ENCODE measurements at regions of chr1 and their contacts with region 1.

Region 1: GRCh38 chr1:10494754-10495474 is 20.2 kb downstream of the PEX14 start:
- DNase-seq: peak; percentile 71 to 87 (median 84)
- H3K4me3 ChIP-seq: peak overlapping the region in 6 of 7 experiments; percentile 38 to 81 (median 63)
- H3K27ac ChIP-seq: peak overlapping the region in 1 of 2 experiments; percentile 65
- H3K4me1 ChIP-seq: peaks cover 0 to 14% (median 12%) of the 10 kb centered on the region in 4 experiments
- H3K27me3 ChIP-seq: no peaks in the 10 kb centered on the region

Region 2: DNA sequence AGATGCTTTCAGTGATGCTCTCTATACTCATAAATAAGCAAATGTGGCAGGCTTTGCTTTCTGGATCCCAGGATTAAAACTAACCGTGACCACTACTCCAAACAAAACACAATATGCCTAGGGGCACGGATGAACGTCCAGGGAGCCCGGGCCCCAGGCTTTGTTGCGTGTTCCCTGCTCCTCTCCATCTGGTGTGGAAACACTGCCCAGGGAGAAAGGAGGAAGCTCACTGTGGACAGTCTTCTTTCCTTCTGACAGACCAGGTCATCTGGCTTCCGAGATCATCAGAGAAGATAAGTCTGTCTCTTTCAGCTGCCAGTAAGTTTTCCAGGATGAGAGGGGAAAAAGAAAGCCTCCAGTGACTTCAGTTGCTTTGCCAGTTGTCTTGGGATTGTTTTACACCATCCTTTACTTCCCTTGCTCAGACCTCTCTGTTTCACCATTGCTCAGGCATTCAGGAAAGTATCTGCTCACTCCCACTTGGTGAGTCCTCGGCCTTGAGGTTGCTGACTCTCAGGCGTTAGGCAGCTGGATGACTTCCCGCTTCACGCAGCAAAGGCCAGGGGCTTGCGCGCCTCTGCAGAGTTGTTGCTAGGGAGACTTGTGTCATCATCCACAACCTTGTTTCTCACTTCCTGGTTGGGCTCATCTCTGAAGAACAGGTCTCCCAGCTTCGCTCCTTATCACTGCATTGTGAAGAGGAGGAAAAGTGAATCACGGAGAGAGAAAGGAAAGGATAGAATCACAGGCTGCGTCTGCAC is 116.7 kb before region 1 on chr1:
- CTCF ChIA-PET with region 1: interaction called, 13 read pairs
- POLR2A ChIA-PET with region 1: no interaction called
- DNase-seq: peak in 2 of 3 donors; percentile 49 to 53
- H3K4me3 ChIP-seq: no peak overlapping the region
- H3K27ac ChIP-seq: no peak overlapping the region
- H3K4me1 ChIP-seq: peaks cover 0 to 4% (median 0%) of the 10 kb centered on the region in 4 experiments
- H3K27me3 ChIP-seq: no peaks in the 10 kb centered on the region

Region 3: GRCh38 chr1:10430216-10431069 is 64.5 kb before region 1 on chr1 and contains the start of gene CENPS:
- CTCF ChIA-PET with region 1: interaction called, 118 read pairs
- POLR2A ChIA-PET with region 1: interaction called, 3 read pairs
- DNase-seq: peak; percentile 83 to 92 (median 90)
- H3K4me3 ChIP-seq: peak within 1 kb of the TSS; percentile 64 to 99 (median 89)
- H3K27ac ChIP-seq: peak within 1 kb of the TSS; percentile 74 to 92
- H3K4me1 ChIP-seq: peaks cover 3 to 24% (median 16%) of the 10 kb centered on the region in 4 experiments
- H3K27me3 ChIP-seq: no peaks in the 10 kb centered on the region

Region 4: DNA sequence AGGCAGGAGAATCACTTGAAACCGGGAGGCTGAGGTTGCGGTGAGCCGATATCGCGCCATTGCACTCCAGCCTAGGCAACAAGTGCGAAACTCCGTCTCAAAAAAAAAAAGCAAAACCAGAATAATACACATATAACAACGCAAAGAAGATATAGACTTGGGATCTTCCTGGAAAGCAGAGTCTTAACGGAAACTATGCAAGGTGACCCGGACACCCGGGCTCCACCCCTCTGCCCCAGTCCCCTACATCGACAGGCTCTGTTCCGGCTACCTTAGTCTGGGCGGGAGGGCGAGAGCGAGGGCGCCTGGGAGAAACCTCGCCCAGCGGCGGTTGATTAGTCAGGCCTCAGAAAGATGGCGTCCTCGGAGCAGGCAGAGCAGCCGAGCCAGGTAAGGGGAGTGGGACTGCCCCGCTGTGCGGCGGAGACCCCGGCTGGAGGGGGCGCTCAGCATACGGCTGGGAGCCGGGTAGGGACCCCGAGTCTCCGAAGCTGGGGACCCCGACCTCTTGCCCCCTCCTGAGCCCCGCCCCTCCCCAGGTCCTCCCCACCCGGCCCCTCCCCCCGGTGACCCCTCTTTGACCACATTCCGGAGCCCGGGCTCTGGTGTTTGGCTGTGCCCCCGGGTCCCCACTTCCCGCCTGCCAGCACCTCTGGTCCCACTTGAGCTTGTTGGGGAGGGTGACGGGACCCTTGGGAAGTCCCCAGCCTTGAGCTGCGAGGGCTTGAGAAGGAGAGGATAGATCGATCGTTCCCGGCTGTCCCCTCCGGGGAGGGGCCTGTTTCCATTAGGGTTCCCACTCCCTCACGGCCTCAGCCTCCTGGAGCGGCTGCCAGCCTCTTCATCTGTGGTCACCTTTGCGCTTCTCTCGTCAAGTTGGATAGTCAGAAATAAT is 20.1 kb before region 1 on chr1 and contains the start of gene PEX14:
- CTCF ChIA-PET with region 1: interaction called, 12 read pairs
- POLR2A ChIA-PET with region 1: no interaction called
- DNase-seq: peak; percentile 83 to 92 (median 90)
- H3K4me3 ChIP-seq: peak within 1 kb of the TSS; percentile 84 to 97 (median 90)
- H3K27ac ChIP-seq: peak within 1 kb of the TSS; percentile 26 to 88
- H3K4me1 ChIP-seq: peaks cover 8 to 38% (median 29%) of the 10 kb centered on the region in 4 experiments
- H3K27me3 ChIP-seq: no peaks in the 10 kb centered on the region

Region 5: GRCh38 chr1:10507111-10507879 is 12.4 kb after region 1 on chr1:
- CTCF ChIA-PET with region 1: interaction called, 108 read pairs
- POLR2A ChIA-PET with region 1: interaction called, 3 read pairs
- DNase-seq: peak; percentile 55 to 71 (median 69)
- H3K4me3 ChIP-seq: no peak overlapping the region
- H3K27ac ChIP-seq: no peak overlapping the region
- H3K4me1 ChIP-seq: peaks cover 21 to 53% (median 45%) of the 10 kb centered on the region in 4 experiments
- H3K27me3 ChIP-seq: no peaks in the 10 kb centered on the region